B cell (primary cell): ENCODE measurements at regions of chr10 and their contacts with region 1.

Region 1: GRCh38 chr10:97731346-97732051 is 5.4 kb upstream of the ZFYVE27 start:
- DNase-seq: peak; percentile 76
- ATAC-seq: peak; percentile 70
- H3K4me3 ChIP-seq: no peak overlapping the region
- H3K4me3 Mint-ChIP-seq: no peak overlapping the region
- H3K27ac ChIP-seq: no peak overlapping the region
- H3K27ac Mint-ChIP-seq: peak overlapping the region; percentile 55
- H3K4me1 ChIP-seq: peaks cover 5 to 6% of the 10 kb centered on the region in 2 donors
- H3K4me1 Mint-ChIP-seq: peaks cover 10% of the 10 kb centered on the region
- H3K27me3 ChIP-seq: peaks cover 0 to 3% (median 0%) of the 10 kb centered on the region in 4 experiments
- H3K27me3 Mint-ChIP-seq: peaks cover 4% of the 10 kb centered on the region
- CTCF ChIP-seq: peak; percentile 82

Region 2: GRCh38 chr10:97378933-97379921 is 352.3 kb before region 1 on chr10:
- CTCF ChIA-PET with region 1: no interaction called
- POLR2A ChIA-PET with region 1: no interaction called
- intact Hi-C with region 1: no loop called
- DNase-seq: peak; percentile 21
- ATAC-seq: no peak
- H3K4me3 ChIP-seq: no peak overlapping the region
- H3K4me3 Mint-ChIP-seq: no peak overlapping the region
- H3K27ac ChIP-seq: no peak overlapping the region
- H3K27ac Mint-ChIP-seq: no peak overlapping the region
- H3K4me1 ChIP-seq: no peaks in the 10 kb centered on the region
- H3K4me1 Mint-ChIP-seq: no peaks in the 10 kb centered on the region
- H3K27me3 ChIP-seq: no peaks in the 10 kb centered on the region
- H3K27me3 Mint-ChIP-seq: no peaks in the 10 kb centered on the region
- CTCF ChIP-seq: no peak

Region 3: DNA sequence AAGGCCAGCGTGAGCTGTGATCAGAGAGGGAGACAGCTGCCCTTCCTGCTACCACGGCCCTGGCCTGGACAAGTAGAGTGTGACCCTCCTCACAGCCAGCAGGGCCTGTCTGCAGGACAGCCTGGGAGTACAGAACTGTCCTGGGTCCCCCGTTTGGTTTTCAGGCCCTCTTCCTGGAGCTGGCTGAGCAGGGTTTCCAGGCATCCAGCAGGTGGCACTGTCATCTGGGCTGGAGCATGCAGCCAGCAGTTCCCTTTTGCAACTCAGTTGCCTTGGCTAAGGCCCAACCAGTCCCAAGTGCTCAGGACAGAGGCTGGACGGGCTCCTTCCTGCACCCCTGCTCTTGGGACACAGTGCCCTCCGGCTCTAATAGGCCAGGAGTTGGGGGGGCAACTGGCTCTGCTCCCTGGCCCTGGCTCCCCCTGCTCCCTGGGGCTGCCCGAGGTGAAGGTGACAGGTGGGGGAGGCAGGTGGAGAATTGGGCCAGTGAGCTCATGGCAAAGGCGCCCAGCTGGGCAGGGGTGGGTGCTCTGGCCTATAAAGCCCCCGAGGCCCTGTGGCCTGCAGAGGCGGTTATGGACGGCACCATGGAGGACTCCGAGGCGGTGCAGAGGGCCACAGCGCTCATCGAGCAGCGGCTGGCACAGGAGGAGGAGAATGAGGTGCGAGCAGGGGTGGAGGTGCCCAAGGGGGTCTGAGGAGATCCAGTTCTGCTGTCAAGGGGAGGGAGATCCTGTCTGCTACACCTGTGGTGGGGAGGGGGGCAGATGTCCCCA is 159.1 kb before region 1 on chr10 and contains the start of gene ANKRD2:
- CTCF ChIA-PET with region 1: interaction called, 13 read pairs
- POLR2A ChIA-PET with region 1: no interaction called
- intact Hi-C with region 1: no loop called
- DNase-seq: peak; percentile 67
- ATAC-seq: peak; percentile 60
- H3K4me3 ChIP-seq: no peak within 1 kb of the TSS
- H3K4me3 Mint-ChIP-seq: no peak within 1 kb of the TSS
- H3K27ac ChIP-seq: no peak within 1 kb of the TSS
- H3K27ac Mint-ChIP-seq: no peak within 1 kb of the TSS
- H3K4me1 ChIP-seq: no peaks in the 10 kb centered on the region
- H3K4me1 Mint-ChIP-seq: no peaks in the 10 kb centered on the region
- H3K27me3 ChIP-seq: no peaks in the 10 kb centered on the region
- H3K27me3 Mint-ChIP-seq: no peaks in the 10 kb centered on the region
- CTCF ChIP-seq: peak; percentile 72
- total RNA-seq, gene ANKRD2: not detected in 2 replicates

Region 4: DNA sequence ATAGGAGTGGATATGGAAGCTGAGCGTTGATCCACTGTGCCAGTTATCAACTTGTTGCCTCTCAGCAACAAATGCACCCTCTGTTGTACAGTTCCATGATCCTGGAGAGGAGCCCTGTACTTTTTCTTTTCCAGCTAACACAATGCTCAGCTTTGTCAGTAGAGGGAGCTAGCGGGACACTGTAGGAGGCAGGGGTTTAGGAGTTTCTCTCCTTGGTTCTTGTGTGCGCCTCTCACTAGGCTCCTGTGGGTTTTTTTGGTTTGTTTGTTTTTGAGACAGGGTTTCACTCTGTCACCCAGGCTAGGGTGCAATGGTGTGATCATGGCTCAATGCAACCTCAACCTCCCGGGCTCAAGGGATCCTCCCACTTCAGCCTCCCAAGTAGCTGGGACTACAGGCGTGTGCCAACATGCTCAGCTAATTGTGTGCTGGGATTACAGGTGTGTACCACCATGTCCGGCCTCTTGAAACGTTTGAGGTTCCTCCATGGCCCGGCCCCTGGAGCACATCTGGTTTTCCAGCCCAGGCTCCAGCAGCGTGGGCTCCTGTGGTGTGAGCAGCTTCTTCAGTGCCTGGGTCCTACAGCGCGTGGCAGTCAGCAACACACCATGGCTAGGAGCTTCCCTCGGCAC is 29.9 kb before region 1 on chr10:
- CTCF ChIA-PET with region 1: interaction called, 117 read pairs
- POLR2A ChIA-PET with region 1: no interaction called
- intact Hi-C with region 1: loop called (anchors 1 kb)
- DNase-seq: peak; percentile 66
- ATAC-seq: peak; percentile 75
- H3K4me3 ChIP-seq: no peak overlapping the region
- H3K4me3 Mint-ChIP-seq: no peak overlapping the region
- H3K27ac ChIP-seq: no peak overlapping the region
- H3K27ac Mint-ChIP-seq: no peak overlapping the region
- H3K4me1 ChIP-seq: no peaks in the 10 kb centered on the region
- H3K4me1 Mint-ChIP-seq: no peaks in the 10 kb centered on the region
- H3K27me3 ChIP-seq: peaks cover 0 to 9% (median 2%) of the 10 kb centered on the region in 4 experiments
- H3K27me3 Mint-ChIP-seq: peaks cover 11% of the 10 kb centered on the region
- CTCF ChIP-seq: peak; percentile 78